ENCODE measurements at regions of chr19 and their contacts with region 1.

Region 1: GRCh38 chr19:32580901-32581703 is at the start of gene PDCD5:
- DNase-seq: peak; percentile 96
- ATAC-seq: peak; percentile 94
- H3K4me3 ChIP-seq: peak within 1 kb of the TSS; percentile 51 to 85 (median 73)
- H3K4me3 Mint-ChIP-seq: peak within 1 kb of the TSS; percentile 96
- H3K27ac ChIP-seq: peak within 1 kb of the TSS in 1 of 2 donors; percentile 78
- H3K27ac Mint-ChIP-seq: peak within 1 kb of the TSS; percentile 95
- H3K4me1 ChIP-seq: peaks cover 13 to 19% of the 10 kb centered on the region in 2 donors
- H3K4me1 Mint-ChIP-seq: peaks cover 18% of the 10 kb centered on the region
- H3K27me3 ChIP-seq: no peaks in the 10 kb centered on the region
- H3K27me3 Mint-ChIP-seq: peaks cover 4% of the 10 kb centered on the region
- CTCF ChIP-seq: no peak
- total RNA-seq, gene PDCD5: 39.5 and 43.2 TPM in 2 replicates

Region 2: GRCh38 chr19:32318880-32319520 is 262.1 kb before region 1 on chr19:
- CTCF ChIA-PET with region 1: no interaction called
- POLR2A ChIA-PET with region 1: no interaction called
- intact Hi-C with region 1: no loop called
- DNase-seq: peak; percentile 17
- ATAC-seq: no peak
- H3K4me3 ChIP-seq: no peak overlapping the region
- H3K4me3 Mint-ChIP-seq: no peak overlapping the region
- H3K27ac ChIP-seq: no peak overlapping the region
- H3K27ac Mint-ChIP-seq: no peak overlapping the region
- H3K4me1 ChIP-seq: no peaks in the 10 kb centered on the region
- H3K4me1 Mint-ChIP-seq: no peaks in the 10 kb centered on the region
- H3K27me3 ChIP-seq: peaks cover 0 to 4% (median 0%) of the 10 kb centered on the region in 4 experiments
- H3K27me3 Mint-ChIP-seq: peaks cover 21% of the 10 kb centered on the region
- CTCF ChIP-seq: peak; percentile 16

Region 3: DNA sequence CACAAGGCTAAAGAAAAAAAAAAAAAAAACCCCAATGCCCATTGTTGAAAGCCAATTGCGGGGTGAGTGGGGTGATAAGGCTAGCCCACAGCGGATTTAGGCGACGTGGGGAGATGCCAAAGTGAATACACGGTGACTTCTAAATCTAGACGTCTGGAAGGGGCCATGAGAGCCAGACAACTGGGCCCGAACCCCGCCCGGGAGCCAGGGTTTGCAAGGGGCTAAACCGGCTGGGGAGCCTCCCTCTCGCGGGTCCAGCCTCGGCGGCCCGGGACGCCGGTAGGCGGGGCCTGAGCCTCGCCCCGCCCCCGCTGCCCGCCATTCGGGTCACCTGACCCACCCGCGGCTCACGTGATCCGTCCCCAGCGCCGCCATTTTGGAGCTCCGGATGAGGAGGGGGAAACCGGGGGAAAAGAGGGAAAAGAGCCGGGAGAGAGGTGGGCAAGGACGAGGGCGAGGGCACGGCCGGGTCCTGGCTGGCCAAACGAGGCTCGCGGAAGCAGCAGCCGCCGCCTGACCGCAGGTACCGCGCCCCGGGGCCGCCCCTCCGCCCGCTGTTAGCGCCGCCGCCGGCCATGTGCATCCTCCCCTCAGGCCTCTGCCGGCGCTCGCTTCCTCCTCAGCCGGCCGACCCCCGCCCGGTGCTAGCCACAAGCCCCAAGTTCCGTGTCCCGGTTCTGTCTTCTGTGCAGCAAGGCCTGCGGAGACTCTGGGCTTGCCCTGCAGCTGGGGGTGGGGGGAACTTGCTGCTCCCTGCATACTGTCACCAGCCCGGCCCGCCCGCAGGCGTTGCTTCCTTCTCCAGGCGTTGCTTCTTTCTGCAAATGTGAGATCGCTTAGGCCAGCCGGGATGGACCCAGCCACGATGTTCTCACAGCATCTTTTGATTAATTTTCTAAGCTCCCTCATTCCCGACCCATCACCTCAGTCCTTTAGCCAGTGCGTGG is 235.6 kb before region 1 on chr19 and contains the start of gene ZNF507:
- CTCF ChIA-PET with region 1: no interaction called
- POLR2A ChIA-PET with region 1: interaction called, 4 read pairs
- intact Hi-C with region 1: loop called (anchors 1 kb)
- DNase-seq: peak; percentile 91
- ATAC-seq: peak; percentile 90
- H3K4me3 ChIP-seq: peak within 1 kb of the TSS; percentile 83 to 97 (median 93)
- H3K4me3 Mint-ChIP-seq: peak within 1 kb of the TSS; percentile 97
- H3K27ac ChIP-seq: peak within 1 kb of the TSS; percentile 69 to 88
- H3K27ac Mint-ChIP-seq: peak within 1 kb of the TSS; percentile 94
- H3K4me1 ChIP-seq: peaks cover 23 to 28% of the 10 kb centered on the region in 2 donors
- H3K4me1 Mint-ChIP-seq: peaks cover 27% of the 10 kb centered on the region
- H3K27me3 ChIP-seq: peaks cover 0 to 6% (median 0%) of the 10 kb centered on the region in 4 experiments
- H3K27me3 Mint-ChIP-seq: no peaks in the 10 kb centered on the region
- CTCF ChIP-seq: no peak
- total RNA-seq, gene ZNF507: 38.6 and 40.5 TPM in 2 replicates

Region 4: DNA sequence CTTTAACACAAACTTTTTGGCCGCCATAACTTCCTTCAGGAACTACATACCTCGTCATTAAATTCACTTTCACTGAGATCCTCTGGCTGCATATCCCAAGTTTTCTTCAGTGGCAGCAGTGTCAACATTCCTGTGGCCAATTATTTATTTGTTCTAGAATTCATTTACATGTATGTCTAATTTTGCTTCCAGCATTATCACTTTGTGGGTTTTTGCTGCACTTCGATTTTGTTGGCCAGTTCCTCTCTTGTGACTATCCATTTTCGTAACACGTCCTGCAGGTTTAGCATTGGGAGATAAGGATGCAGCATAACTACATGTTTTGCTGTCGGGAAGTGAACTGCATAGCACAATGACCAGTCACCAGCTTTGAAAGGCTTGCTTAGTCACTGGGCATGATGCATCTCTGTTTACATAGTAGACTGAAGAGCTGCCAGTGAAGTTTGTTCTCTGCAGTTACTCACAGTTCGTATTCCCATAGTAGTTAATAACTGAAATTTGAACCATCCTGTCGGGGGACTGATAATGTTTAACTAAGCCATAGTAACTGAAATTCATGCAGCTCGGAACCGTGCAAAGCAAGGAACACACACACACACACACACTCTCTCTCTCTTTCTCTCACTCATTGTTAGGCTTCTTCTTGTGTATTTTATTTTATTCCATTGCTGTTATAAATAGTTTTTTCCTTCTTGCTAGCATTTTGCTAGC is 207.4 kb before region 1 on chr19:
- CTCF ChIA-PET with region 1: no interaction called
- POLR2A ChIA-PET with region 1: no interaction called
- intact Hi-C with region 1: no loop called
- DNase-seq: no peak
- ATAC-seq: no peak
- H3K4me3 ChIP-seq: no peak overlapping the region
- H3K4me3 Mint-ChIP-seq: no peak overlapping the region
- H3K27ac ChIP-seq: no peak overlapping the region
- H3K27ac Mint-ChIP-seq: no peak overlapping the region
- H3K4me1 ChIP-seq: no peaks in the 10 kb centered on the region
- H3K4me1 Mint-ChIP-seq: peaks cover 6% of the 10 kb centered on the region
- H3K27me3 ChIP-seq: no peaks in the 10 kb centered on the region
- H3K27me3 Mint-ChIP-seq: no peaks in the 10 kb centered on the region
- CTCF ChIP-seq: no peak

Region 5: DNA sequence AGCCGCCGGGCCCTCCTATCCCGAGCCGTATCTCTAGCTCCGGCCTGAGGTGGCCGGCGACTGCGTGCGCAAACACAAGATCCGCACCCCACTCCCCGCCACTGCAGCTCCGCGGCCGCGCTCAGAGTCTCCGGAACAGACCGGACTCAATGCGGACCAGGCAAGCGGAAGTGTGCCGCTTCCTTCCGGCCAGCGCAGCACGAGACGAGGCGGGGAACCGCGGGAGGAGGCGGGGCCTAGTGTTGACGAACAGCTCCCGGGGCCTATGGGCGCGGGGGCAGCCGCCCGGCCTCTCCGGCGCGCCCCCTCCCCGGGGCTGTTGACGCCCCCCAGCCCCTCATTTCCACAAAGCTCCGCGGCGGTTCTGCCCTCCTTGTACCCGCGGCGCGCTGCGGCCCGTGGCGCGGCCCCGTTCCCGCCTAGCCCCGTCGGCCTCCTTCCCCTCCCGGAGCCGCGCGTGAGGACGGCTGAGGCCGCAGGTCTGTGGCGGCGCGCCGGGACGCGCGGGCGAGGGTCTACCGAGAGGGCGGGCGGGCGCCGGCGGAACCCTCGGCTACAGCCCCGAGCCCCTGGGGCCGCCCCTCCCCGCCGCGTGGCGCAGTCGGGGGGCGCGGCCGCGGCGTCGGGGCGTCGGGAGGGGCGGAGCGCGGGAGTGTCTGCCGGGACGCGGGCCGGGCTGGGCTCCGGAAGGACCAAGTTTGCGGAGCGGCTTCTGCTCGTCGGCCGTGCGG is 175.5 kb before region 1 on chr19 and contains the start of gene DPY19L3:
- CTCF ChIA-PET with region 1: no interaction called
- POLR2A ChIA-PET with region 1: interaction called, 6 read pairs
- intact Hi-C with region 1: loop called (anchors 1 kb)
- DNase-seq: peak; percentile 93
- ATAC-seq: peak; percentile 89
- H3K4me3 ChIP-seq: peak within 1 kb of the TSS; percentile 66 to 89 (median 80)
- H3K4me3 Mint-ChIP-seq: peak within 1 kb of the TSS; percentile 92
- H3K27ac ChIP-seq: peak within 1 kb of the TSS; percentile 74 to 93
- H3K27ac Mint-ChIP-seq: peak within 1 kb of the TSS; percentile 94
- H3K4me1 ChIP-seq: peaks cover 11 to 19% of the 10 kb centered on the region in 2 donors
- H3K4me1 Mint-ChIP-seq: peaks cover 15% of the 10 kb centered on the region
- H3K27me3 ChIP-seq: no peaks in the 10 kb centered on the region
- H3K27me3 Mint-ChIP-seq: no peaks in the 10 kb centered on the region
- CTCF ChIP-seq: no peak
- total RNA-seq, gene DPY19L3: 33.3 and 40.0 TPM in 2 replicates

Region 6: DNA sequence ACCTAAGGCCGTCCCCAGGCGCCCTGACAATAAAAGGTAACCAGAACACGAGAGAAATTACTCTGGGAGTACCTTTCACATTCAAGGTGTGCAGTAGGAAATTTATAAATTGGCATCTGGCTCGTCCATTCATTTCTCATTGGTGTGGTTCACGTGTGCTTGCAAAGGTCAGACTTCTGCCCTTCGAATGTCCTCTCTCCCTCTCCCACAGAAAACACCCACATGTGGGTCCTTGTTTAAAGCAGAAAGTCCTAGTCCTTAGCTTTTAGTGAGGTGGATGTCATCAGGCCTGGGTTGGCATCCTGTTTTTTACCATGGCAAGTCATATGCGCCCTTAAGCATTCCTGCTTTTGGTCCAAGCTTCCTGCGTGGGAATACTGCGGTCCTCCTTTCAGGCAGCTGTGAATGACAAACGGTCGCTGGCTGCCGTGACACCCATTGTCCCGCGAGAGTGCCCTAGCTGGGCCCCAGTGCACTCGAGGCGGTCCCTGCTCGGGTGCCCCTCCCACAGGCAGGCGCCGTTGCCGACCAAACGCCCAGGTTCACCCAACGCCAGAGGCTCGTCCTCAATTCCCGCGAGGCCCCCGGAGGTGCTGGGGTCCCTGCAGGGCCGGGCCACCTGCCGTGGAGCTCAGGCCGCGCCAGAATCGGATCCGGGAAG is 110.3 kb after region 1 on chr19 and contains the start of gene NUDT19:
- CTCF ChIA-PET with region 1: no interaction called
- POLR2A ChIA-PET with region 1: no interaction called
- intact Hi-C with region 1: loop called (anchors 5 kb)
- DNase-seq: peak; percentile 82
- ATAC-seq: peak; percentile 92
- H3K4me3 ChIP-seq: peak within 1 kb of the TSS; percentile 8 to 77 (median 66)
- H3K4me3 Mint-ChIP-seq: peak within 1 kb of the TSS; percentile 91
- H3K27ac ChIP-seq: peak within 1 kb of the TSS; percentile 37 to 70
- H3K27ac Mint-ChIP-seq: peak within 1 kb of the TSS; percentile 88
- H3K4me1 ChIP-seq: peaks cover 19 to 31% of the 10 kb centered on the region in 2 donors
- H3K4me1 Mint-ChIP-seq: peaks cover 45% of the 10 kb centered on the region
- H3K27me3 ChIP-seq: no peaks in the 10 kb centered on the region
- H3K27me3 Mint-ChIP-seq: no peaks in the 10 kb centered on the region
- CTCF ChIP-seq: no peak
- total RNA-seq, gene NUDT19: 7.1 and 8.9 TPM in 2 replicates

Region 7: GRCh38 chr19:33080761-33081681 is 499.9 kb after region 1 on chr19 and contains the start of gene GPATCH1:
- CTCF ChIA-PET with region 1: no interaction called
- POLR2A ChIA-PET with region 1: no interaction called
- intact Hi-C with region 1: loop called (anchors 2 kb)
- DNase-seq: peak; percentile 89
- ATAC-seq: peak; percentile 97
- H3K4me3 ChIP-seq: peak within 1 kb of the TSS; percentile 75 to 98 (median 90)
- H3K4me3 Mint-ChIP-seq: peak within 1 kb of the TSS; percentile 93
- H3K27ac ChIP-seq: peak within 1 kb of the TSS; percentile 62 to 85
- H3K27ac Mint-ChIP-seq: peak within 1 kb of the TSS; percentile 93
- H3K4me1 ChIP-seq: peaks cover 9 to 15% of the 10 kb centered on the region in 2 donors
- H3K4me1 Mint-ChIP-seq: peaks cover 19% of the 10 kb centered on the region
- H3K27me3 ChIP-seq: no peaks in the 10 kb centered on the region
- H3K27me3 Mint-ChIP-seq: no peaks in the 10 kb centered on the region
- CTCF ChIP-seq: no peak
- total RNA-seq, gene GPATCH1: 14.6 and 16.9 TPM in 2 replicates

Region 8: GRCh38 chr19:33339016-33339984 is 758.2 kb after region 1 on chr19:
- CTCF ChIA-PET with region 1: no interaction called
- POLR2A ChIA-PET with region 1: no interaction called
- intact Hi-C with region 1: no loop called
- DNase-seq: no peak
- ATAC-seq: no peak
- H3K4me3 ChIP-seq: no peak overlapping the region
- H3K4me3 Mint-ChIP-seq: no peak overlapping the region
- H3K27ac ChIP-seq: no peak overlapping the region
- H3K27ac Mint-ChIP-seq: no peak overlapping the region
- H3K4me1 ChIP-seq: no peaks in the 10 kb centered on the region
- H3K4me1 Mint-ChIP-seq: no peaks in the 10 kb centered on the region
- H3K27me3 ChIP-seq: peaks cover 0 to 9% (median 6%) of the 10 kb centered on the region in 4 experiments
- H3K27me3 Mint-ChIP-seq: peaks cover 49% of the 10 kb centered on the region
- CTCF ChIP-seq: no peak

Measured in B cell (primary cell).